Mammary epithelial cell (primary cell): ENCODE measurements at regions of chr16 and their contacts with region 1.

Region 1: DNA sequence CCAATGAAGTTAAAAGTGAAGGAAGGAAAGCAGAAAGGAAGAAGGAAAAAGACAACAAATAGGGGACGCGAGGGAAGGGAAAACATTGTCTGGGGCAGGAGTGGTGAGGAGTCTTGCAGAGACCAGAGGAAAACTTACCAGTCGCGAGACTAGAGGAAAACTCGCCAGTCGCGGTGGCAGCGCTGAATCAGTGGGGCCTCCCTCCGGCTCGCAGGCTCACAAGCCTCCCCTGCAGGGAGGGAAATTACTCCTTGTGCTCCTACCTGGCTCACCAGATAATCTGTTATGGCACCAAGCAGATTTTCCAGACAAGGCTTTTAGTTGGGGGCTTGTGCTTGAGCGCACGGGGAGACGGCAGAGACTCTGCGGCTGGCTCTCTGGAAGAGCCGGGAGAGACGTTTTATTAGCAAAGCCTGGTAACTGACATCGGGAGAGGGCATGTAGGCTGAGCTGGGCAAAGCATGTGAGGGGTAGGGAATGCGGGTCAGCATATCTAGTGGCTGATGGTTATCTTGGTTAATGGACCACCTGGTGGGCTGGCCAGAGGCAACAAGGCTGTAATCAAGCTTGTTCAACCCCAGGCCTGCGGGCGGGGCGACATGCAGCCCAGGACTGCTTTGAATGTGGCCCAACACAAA is 37.1 kb downstream of the LCMT1 start:
- DNase-seq: no peak
- H3K4me3 ChIP-seq: no peak overlapping the region
- H3K27ac ChIP-seq: no peak overlapping the region
- H3K4me1 ChIP-seq: peaks cover 4% of the 10 kb centered on the region
- H3K27me3 ChIP-seq: no peaks in the 10 kb centered on the region
- CTCF ChIP-seq: no peak

Region 2: DNA sequence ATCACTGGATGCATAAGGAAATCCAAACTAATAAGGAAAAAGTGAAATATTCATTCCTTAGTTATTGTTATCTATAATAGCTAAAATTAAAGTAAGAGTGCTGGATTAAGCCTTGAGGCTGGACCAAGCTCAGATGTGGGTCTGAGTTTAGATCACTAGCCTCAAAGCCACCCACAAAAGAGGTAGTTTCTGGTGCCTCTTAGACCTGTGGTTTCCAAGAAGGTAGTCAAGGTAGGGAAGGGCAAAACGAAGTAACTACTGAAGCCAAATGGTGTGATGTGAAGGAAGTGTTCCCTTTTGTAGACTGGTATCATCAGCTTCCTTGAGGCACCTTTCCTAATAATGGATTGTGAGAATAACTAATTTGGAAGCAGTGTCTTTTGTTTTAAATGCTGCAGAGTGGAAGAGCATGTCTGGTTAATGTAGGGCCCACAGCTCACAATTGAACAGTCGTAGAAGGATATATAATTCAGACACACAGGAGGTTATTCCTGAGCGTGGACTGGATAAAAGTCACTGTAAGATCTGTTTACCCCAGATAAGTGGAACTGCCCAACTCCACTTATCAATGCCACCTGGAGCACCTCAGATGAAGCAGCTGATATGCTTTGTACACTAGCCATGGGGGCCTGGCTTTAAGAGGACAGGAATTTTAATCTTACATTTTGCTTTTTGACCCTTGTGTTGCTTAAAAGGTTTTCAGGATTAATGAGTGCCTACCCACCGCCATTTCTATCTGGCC is 68.9 kb before region 1 on chr16:
- CTCF ChIA-PET with region 1: no interaction called
- dilution Hi-C with region 1: no loop called
- in situ Hi-C with region 1: no loop called
- intact Hi-C with region 1: no loop called
- DNase-seq: no peak
- H3K4me3 ChIP-seq: no peak overlapping the region
- H3K27ac ChIP-seq: no peak overlapping the region
- H3K4me1 ChIP-seq: no peaks in the 10 kb centered on the region
- H3K27me3 ChIP-seq: no peaks in the 10 kb centered on the region
- CTCF ChIP-seq: no peak

Region 3: DNA sequence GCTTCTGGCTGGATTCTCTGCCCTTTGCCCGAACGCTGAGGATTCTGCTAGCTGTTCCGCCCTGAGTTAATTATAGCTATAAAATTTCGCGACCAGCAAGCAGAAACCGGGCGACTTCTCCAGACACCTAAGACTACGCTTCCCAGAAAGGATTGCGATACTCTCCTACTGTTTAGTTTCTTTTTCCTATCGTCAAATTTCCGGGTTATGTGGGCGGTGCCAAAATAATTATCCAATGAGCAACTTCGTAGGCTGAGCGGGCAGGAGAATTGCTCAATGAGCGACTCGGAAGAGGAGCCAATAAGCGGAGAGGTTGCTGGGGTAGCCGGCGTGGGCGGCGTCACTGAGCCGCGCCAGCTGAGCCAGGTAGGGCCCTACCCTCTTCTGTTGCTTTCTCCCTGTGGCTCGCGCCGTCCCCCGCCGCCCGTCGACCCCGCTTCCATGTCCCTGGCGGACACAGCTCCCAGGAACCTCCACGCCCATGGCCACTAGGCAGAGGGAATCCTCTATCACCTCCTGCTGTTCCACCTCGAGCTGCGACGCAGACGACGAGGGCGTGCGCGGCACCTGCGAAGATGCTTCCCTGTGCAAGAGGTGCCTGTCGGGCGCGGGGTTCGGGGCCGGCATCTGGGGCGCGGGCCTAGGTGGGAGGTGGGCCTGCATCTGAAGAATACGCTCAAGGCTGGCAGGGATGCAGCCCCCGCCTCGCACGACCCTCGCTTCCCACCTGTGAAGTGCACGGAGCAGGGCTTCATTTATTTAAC is 37.1 kb before region 1 on chr16 and contains the start of gene LCMT1:
- CTCF ChIA-PET with region 1: no interaction called
- dilution Hi-C with region 1: loop called (anchors 5 kb)
- in situ Hi-C with region 1: no loop called
- intact Hi-C with region 1: no loop called
- DNase-seq: peak; percentile 97
- H3K4me3 ChIP-seq: peak within 1 kb of the TSS; percentile 79 to 97 (median 89)
- H3K27ac ChIP-seq: peak within 1 kb of the TSS; percentile 72
- H3K4me1 ChIP-seq: peaks cover 30% of the 10 kb centered on the region
- H3K27me3 ChIP-seq: no peaks in the 10 kb centered on the region
- CTCF ChIP-seq: no peak
- total RNA-seq, gene LCMT1: 30.5 to 43.0 TPM

Region 4: DNA sequence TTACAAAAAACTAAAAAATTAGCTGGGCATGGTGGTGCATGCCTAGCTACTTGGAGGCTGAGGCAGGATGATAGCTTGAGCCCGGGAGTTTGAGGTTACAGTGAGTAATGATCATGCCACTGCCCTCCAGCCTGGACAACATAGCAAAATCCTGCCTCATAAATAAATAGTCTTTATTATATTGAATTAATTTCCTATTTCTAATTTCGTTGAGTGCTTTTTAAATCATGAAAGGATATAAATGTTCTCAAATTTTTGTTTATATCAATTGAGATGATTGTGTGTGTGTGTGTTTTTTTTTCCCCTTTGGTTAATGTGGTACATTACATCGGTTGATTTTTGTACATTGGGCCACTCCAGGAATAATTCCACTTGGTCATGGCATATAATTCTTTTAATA is 36.1 kb after region 1 on chr16:
- CTCF ChIA-PET with region 1: no interaction called
- dilution Hi-C with region 1: loop called (anchors 5 kb)
- in situ Hi-C with region 1: no loop called
- intact Hi-C with region 1: no loop called
- DNase-seq: peak; percentile 27
- H3K4me3 ChIP-seq: no peak overlapping the region
- H3K27ac ChIP-seq: no peak overlapping the region
- H3K4me1 ChIP-seq: peaks cover 4% of the 10 kb centered on the region
- H3K27me3 ChIP-seq: no peaks in the 10 kb centered on the region
- CTCF ChIP-seq: no peak

Region 5: GRCh38 chr16:25216785-25217526 is 68.3 kb after region 1 on chr16 and contains the start of gene AQP8:
- CTCF ChIA-PET with region 1: no interaction called
- dilution Hi-C with region 1: loop called (anchors 5 kb)
- in situ Hi-C with region 1: no loop called
- intact Hi-C with region 1: no loop called
- DNase-seq: no peak
- H3K4me3 ChIP-seq: no peak within 1 kb of the TSS
- H3K27ac ChIP-seq: no peak within 1 kb of the TSS
- H3K4me1 ChIP-seq: no peaks in the 10 kb centered on the region
- H3K27me3 ChIP-seq: no peaks in the 10 kb centered on the region
- CTCF ChIP-seq: no peak
- total RNA-seq, gene AQP8: not detected